ENCODE measurements at regions of chr19 and their contacts with region 1.

Region 1: DNA sequence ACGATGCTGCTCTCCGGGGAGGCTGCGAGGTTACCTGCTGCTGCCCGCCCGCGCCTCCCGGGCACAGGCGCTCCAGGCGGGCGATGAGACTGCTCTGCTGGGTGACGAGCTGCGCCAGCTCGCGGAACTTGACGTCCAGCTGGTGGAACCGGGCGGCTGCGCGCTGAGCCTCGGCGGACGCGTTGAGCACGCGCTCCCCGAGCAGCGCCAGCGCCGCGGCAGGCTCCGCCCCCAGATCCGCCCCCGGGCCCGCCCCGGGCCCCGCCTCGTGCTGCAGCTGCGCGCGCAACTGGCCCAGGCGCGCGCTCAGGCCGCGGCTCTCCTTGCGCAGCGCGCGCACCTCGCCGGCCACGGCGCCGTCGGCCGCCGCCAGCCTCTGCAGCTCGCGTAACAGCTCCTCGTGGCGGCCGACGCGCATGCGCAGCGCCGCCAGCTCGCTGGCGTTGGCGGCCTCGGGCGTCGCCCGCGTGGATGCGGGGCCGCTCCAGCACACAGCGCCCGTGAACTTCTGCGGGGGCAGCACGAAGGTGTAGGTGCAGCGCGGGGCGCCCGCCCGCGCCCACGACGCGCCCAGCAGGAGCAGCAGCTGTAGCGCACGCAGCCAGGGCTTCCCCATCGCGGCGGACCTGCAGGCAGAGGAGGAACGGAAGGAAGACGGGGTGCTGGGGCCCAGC is 6.4 kb downstream of the ANGPTL6 start:
- DNase-seq: peak; percentile 98
- H3K4me3 Mint-ChIP-seq: peak overlapping the region; percentile 62
- H3K27ac Mint-ChIP-seq: peak overlapping the region; percentile 80
- H3K4me1 Mint-ChIP-seq: peaks cover 20% of the 10 kb centered on the region
- H3K27me3 Mint-ChIP-seq: no peaks in the 10 kb centered on the region

Region 2: DNA sequence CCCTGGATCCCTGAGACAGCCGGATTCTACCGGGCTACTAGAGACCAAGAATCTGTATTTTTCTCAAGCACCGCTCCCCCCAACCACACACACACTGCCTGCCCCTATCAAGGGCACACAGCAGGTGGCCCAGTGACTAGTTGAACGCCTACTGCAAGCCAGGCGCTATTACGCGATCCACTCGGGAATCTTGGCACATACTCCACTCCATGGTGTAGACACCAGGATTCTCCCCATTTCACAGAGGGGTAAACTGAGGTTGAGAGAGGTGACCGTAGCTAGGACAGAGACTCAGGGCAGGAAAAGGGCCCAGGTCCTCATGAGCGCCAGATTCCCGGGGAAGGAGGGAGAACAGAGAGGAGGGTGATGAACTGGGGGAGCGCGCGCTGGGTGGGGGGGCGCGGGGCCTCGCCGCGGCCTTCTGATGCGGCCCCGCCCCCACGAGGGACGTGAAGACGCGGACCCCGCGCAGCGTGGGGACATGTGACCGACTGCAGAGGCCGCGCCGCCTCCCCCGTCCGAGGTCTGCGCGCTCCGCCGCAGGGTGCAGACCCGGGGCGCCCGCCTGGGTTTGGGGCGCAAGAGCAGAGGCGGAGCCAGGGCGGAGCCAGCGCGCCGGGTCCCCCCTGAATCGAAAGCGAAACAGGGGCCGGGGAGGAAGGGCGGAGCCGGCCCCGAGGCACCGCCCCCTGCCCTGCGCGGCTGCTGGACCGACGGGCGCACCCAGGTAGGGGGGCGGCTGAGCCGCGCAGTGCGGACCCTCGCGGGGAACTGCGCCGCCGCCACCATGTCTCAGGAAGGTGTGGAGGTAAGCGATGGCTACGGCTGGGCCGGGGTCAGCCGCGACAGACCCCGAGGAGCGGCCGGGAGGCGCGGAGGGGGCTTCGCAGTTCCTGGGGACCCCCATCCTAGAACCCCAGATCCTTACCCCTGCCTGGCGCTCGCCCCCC is 10.2 kb before region 1 on chr19 and contains the start of gene SHFL:
- intact Hi-C with region 1: loop called (anchors 1 kb)
- DNase-seq: peak; percentile 97
- H3K4me3 Mint-ChIP-seq: peak within 1 kb of the TSS; percentile 91
- H3K27ac Mint-ChIP-seq: peak within 1 kb of the TSS; percentile 88
- H3K4me1 Mint-ChIP-seq: peaks cover 14% of the 10 kb centered on the region
- H3K27me3 Mint-ChIP-seq: no peaks in the 10 kb centered on the region
- total RNA-seq, gene SHFL: 56.0 and 60.5 TPM in 2 replicates

Region 3: GRCh38 chr19:10112895-10113591 is 17.0 kb after region 1 on chr19:
- intact Hi-C with region 1: loop called (anchors 2 kb)
- DNase-seq: peak; percentile 90
- H3K4me3 Mint-ChIP-seq: peak overlapping the region; percentile 58
- H3K27ac Mint-ChIP-seq: peak overlapping the region; percentile 91
- H3K4me1 Mint-ChIP-seq: peaks cover 39% of the 10 kb centered on the region
- H3K27me3 Mint-ChIP-seq: no peaks in the 10 kb centered on the region